Activated CD4-positive, alpha-beta T cell treated with anti-CD3 and anti-CD28 coated beads for 36 hours (primary cell): ENCODE measurements at regions of chr1 and their contacts with region 1.

Region 1: GRCh38 chr1:169138866-169139670 is 32.6 kb downstream of the ATP1B1 start:
- DNase-seq: no peak
- ATAC-seq: peak; percentile 95
- H3K4me3 Mint-ChIP-seq: no peak overlapping the region
- H3K27ac Mint-ChIP-seq: no peak overlapping the region
- H3K4me1 Mint-ChIP-seq: peaks cover 12% of the 10 kb centered on the region
- H3K27me3 Mint-ChIP-seq: no peaks in the 10 kb centered on the region

Region 2: DNA sequence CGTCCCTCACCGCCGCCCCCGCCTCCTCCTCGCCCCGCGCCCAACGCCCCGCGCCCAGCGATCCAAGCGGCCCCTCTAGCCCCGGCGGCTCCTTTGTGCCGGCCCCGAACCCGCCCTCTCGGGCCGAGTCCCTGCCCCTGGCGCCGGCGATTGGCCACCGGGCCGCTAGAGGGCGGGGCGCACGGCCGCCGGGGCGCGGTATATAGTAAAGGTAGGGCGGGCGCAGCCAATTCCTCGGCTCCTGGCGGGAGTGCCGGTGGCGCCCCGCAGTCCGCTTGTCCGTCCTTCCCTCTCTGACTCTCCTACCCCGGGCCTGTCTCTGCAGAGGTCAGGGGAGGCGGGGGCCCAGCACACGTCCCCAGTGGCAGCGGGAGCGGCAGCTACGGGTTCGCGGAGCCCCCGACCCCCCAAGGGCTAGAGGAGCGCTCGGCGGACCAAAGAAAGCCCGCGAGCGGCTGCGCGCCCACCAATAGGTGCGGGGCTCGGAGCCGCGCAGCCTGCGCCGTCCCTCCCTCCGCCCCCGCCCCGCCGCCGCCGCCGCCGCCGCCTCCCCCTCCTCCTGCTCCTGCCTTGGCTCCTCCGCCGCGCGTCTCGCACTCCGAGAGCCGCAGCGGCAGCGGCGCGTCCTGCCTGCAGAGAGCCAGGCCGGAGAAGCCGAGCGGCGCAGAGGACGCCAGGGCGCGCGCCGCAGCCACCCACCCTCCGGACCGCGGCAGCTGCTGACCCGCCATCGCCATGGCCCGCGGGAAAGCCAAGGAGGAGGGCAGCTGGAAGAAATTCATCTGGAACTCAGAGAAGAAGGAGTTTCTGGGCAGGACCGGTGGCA is 32.8 kb before region 1 on chr1 and contains the start of gene ATP1B1:
- CTCF ChIA-PET with region 1: interaction called, 3 read pairs
- POLR2A ChIA-PET with region 1: no interaction called
- intact Hi-C with region 1: loop called in 1 of 2 experiments (anchors 1 kb)
- DNase-seq: peak; percentile 88
- ATAC-seq: peak; percentile 91
- H3K4me3 Mint-ChIP-seq: peak within 1 kb of the TSS; percentile 78
- H3K27ac Mint-ChIP-seq: peak within 1 kb of the TSS; percentile 63
- H3K4me1 Mint-ChIP-seq: peaks cover 41% of the 10 kb centered on the region
- H3K27me3 Mint-ChIP-seq: peaks cover 18% of the 10 kb centered on the region
- total RNA-seq, gene ATP1B1: 2.9 to 3.3 TPM

Region 3: GRCh38 chr1:169161496-169162194 is 22.6 kb after region 1 on chr1:
- CTCF ChIA-PET with region 1: no interaction called
- POLR2A ChIA-PET with region 1: no interaction called
- intact Hi-C with region 1: loop called in 1 of 2 experiments (anchors 1 kb)
- DNase-seq: no peak
- ATAC-seq: no peak
- H3K4me3 Mint-ChIP-seq: no peak overlapping the region
- H3K27ac Mint-ChIP-seq: no peak overlapping the region
- H3K4me1 Mint-ChIP-seq: peaks cover 8% of the 10 kb centered on the region
- H3K27me3 Mint-ChIP-seq: no peaks in the 10 kb centered on the region

Region 4: DNA sequence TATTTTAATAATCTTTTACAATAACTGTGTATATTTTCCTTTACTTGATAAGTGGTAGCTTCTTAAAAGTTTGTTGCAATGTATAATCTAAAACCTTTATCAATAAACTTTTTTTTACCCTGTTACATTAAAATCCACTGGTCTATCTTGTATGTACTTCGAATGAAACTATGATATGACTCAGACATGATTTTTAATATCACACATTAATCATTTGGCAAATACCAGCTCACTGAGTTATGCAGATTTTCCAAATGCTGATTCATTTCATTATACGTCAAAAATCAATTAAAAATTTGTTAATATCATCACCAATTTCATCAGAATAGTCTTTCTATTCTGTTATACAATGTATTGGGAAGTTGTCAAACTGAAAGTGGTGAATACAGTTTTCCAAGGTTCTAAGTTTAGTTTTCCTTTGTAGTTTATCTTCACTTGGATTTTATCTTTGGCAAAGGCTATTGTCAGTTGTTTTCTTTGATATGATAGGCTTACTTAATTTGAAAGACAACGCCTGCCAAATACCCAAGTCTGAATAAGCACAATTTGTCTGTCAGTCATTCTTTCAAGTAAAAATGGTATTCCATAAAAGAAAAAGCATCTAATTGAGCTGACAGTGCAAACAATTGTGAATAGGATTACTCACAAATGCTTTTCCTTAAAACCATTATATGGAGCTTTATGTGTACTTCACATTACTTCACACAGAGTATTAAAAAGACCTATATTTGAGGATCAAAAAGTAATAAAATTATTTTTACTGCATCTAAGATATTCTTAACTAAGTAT is 101.6 kb after region 1 on chr1:
- CTCF ChIA-PET with region 1: no interaction called
- POLR2A ChIA-PET with region 1: no interaction called
- intact Hi-C with region 1: loop called (anchors 1 kb)
- DNase-seq: no peak
- ATAC-seq: peak; percentile 69
- H3K4me3 Mint-ChIP-seq: no peak overlapping the region
- H3K27ac Mint-ChIP-seq: no peak overlapping the region
- H3K4me1 Mint-ChIP-seq: peaks cover 19% of the 10 kb centered on the region
- H3K27me3 Mint-ChIP-seq: no peaks in the 10 kb centered on the region